MCF 10A (cell line): ENCODE measurements at regions of chr20 and their contacts with region 1.

Region 1: DNA sequence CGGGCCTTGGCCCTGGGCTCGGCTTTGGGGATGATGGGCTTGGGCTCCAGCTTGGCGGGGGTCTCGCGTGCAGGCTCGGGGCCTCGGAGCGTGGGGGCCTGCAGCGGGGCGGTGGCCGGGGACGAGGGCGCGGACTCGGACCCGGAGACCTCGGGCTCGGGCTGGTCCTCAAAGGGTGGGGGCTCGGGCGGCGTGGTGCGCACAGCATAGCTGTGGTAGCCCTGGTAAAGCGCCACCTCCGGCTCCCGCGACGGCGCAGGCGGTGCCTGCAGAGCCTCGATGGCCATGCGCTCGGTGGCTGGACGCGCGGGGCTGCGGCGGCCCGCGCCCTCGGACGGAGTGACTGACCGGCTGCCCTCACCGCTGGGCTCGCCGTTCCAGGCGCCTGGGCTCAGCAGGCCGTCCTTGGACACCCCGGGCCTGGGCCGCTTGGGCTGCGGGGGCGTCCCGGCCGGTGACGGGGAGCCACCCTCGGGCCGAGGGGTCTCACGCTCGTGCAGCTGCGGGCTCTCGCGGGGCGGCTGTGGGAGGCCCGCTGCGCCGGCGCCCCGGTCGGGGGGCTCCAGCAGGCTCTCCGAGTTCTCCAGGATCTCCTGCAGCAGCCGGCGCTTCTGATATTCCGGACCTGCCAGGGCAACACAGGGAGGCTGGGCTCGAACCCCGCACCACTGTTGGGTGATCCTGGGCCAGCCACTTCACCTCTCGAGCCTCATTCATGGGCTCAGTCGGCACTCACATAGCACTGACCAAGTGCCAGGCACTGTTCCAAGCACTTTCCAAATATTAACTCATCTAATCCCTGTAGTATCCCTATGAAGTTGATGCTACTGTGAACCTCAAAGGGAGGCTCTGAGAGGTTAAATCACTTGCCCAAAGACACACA is 71.0 kb downstream of the JPH2 start:
- DNase-seq: no peak
- H3K4me3 Mint-ChIP-seq: no peak overlapping the region
- H3K27ac Mint-ChIP-seq: no peak overlapping the region
- H3K4me1 Mint-ChIP-seq: peaks cover 6% of the 10 kb centered on the region
- H3K27me3 Mint-ChIP-seq: no peaks in the 10 kb centered on the region
- CTCF ChIP-seq: no peak

Region 2: DNA sequence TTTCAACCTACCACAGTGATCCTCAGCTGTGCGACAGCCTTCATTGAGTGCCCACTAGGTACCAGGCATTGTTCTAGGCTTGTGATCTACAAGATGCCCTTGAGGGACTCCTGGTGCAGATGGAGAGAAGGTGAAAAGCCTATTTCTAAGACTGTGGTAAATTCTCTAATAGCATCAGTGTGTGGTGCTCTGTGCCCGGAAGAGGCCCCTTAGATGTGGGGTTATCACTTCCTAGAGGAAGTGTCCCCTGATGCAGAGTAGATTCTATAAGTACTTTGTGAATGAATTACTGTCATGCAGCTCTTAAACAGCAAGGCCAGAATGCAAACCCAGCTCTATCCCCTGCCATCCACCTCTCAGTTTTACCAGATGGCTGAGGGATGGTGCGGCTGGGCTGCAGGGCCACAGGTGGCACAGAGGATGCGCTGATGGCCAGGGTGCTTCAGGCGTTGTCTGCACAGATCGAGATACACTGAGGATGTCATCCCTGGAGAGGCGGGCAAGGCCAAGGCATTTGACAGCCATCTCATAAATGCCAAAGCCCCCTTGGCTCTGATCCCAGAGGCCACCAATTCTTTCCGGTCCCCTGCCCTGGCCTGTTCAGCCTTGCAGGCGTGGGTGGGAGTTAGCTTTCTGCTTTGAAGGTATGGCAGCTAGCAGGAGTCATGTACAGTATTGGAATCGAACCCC is 104.6 kb before region 1 on chr20:
- CTCF ChIA-PET with region 1: no interaction called
- POLR2A ChIA-PET with region 1: no interaction called
- intact Hi-C with region 1: no loop called
- DNase-seq: no peak
- H3K4me3 Mint-ChIP-seq: no peak overlapping the region
- H3K27ac Mint-ChIP-seq: no peak overlapping the region
- H3K4me1 Mint-ChIP-seq: no peaks in the 10 kb centered on the region
- H3K27me3 Mint-ChIP-seq: no peaks in the 10 kb centered on the region
- CTCF ChIP-seq: no peak

Region 3: GRCh38 chr20:44137210-44137801 is 21.3 kb after region 1 on chr20:
- CTCF ChIA-PET with region 1: interaction called, 17 read pairs
- POLR2A ChIA-PET with region 1: interaction called, 3 read pairs
- intact Hi-C with region 1: no loop called
- DNase-seq: no peak
- H3K4me3 Mint-ChIP-seq: no peak overlapping the region
- H3K27ac Mint-ChIP-seq: no peak overlapping the region
- H3K4me1 Mint-ChIP-seq: no peaks in the 10 kb centered on the region
- H3K27me3 Mint-ChIP-seq: no peaks in the 10 kb centered on the region
- CTCF ChIP-seq: no peak

Region 4: GRCh38 chr20:44153636-44154043 is 37.6 kb after region 1 on chr20:
- CTCF ChIA-PET with region 1: interaction called, 11 read pairs
- POLR2A ChIA-PET with region 1: interaction called, 4 read pairs
- intact Hi-C with region 1: no loop called
- DNase-seq: no peak
- H3K4me3 Mint-ChIP-seq: no peak overlapping the region
- H3K27ac Mint-ChIP-seq: no peak overlapping the region
- H3K4me1 Mint-ChIP-seq: peaks cover 15% of the 10 kb centered on the region
- H3K27me3 Mint-ChIP-seq: no peaks in the 10 kb centered on the region
- CTCF ChIP-seq: no peak

Region 5: GRCh38 chr20:44180814-44181213 is 64.8 kb after region 1 on chr20:
- CTCF ChIA-PET with region 1: interaction called, 638 read pairs
- POLR2A ChIA-PET with region 1: interaction called, 6 read pairs
- intact Hi-C with region 1: no loop called
- DNase-seq: no peak
- H3K4me3 Mint-ChIP-seq: no peak overlapping the region
- H3K27ac Mint-ChIP-seq: no peak overlapping the region
- H3K4me1 Mint-ChIP-seq: peaks cover 41% of the 10 kb centered on the region
- H3K27me3 Mint-ChIP-seq: no peaks in the 10 kb centered on the region
- CTCF ChIP-seq: no peak

Region 6: DNA sequence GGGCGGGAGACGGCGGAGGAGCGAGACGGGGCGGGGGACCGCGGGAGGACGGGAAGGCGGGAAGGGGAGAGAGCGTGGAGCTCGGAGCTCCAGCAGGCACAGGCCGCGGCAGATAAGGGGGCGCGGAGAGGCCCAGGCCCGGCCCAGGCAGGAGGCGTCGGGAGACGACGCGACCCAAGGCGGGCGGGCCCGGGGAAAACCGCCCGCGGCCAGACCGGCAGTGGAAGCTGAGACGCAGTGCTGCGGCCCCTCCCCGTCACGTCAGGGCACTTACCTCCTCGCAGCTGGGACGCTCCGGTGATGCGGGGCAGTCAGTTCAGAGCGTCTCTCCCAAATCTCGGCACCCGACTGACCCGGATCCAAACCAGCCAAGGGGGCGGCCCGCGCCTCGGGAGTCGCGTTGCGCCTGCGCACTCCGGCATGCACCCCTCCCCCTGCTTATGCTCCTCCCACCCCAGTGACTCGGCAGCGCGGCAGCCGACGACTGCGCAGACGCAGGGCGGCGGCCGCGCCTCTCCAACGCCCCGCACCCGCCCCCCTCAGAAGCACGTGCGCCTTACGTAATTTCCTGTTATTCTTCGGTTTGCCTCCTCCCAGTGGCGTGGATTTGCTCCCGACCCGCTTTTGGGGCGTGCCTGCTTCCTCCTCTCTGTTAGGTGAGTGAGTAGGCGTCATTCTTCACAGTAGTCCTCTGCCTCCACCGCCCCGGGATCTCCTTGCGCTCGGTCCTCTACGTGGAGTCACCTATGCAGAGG is 94.6 kb after region 1 on chr20 and contains the start of gene OSER1:
- CTCF ChIA-PET with region 1: interaction called, 16 read pairs
- POLR2A ChIA-PET with region 1: interaction called, 10 read pairs
- intact Hi-C with region 1: loop called (anchors 1 kb)
- DNase-seq: peak; percentile 99
- H3K4me3 Mint-ChIP-seq: peak within 1 kb of the TSS; percentile 100
- H3K27ac Mint-ChIP-seq: peak within 1 kb of the TSS; percentile 100
- H3K4me1 Mint-ChIP-seq: peaks cover 39% of the 10 kb centered on the region
- H3K27me3 Mint-ChIP-seq: no peaks in the 10 kb centered on the region
- CTCF ChIP-seq: no peak
- total RNA-seq, gene OSER1: 45.4 and 50.8 TPM in 2 replicates